ENCODE measurements at regions of chr5 and their contacts with region 1.

Region 1: DNA sequence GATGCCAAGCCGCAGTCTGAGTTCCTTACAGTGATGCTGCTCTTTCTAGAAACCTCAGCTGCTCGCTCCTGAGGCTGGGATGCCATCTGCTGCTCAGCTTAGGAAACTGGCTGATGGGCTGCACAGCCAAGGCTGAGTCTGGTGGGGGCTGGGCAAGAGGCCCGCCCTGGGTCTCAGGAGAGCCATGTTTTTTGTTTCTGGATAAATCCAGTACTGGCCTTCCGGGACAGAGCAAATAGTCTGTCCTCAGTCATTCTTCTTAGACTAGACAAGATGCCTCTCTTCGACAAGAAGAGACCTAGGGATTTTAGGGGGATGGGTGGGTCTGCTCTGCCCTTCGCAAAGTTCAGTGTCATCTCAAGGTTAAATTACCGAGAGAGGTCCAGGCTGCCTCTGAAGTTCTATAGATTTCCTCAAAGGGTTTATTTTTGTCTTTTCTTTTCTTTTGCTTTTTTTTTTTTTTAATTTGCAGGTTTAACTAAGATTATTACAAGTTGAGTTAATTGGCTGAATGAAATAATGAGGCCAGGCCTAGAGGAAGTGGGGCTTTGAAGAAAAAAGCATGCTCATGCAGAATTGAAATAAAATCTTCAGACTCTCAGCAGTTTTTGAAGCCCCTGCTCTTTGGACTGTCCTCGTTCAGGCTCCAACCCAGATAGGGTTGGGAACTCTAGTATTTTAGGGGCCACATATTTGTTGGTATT is 30.6 kb upstream of the MATR3 start:
- DNase-seq: peak; percentile 86
- H3K4me3 Mint-ChIP-seq: no peak overlapping the region
- H3K27ac Mint-ChIP-seq: no peak overlapping the region
- H3K4me1 Mint-ChIP-seq: peaks cover 2% of the 10 kb centered on the region
- H3K27me3 Mint-ChIP-seq: no peaks in the 10 kb centered on the region

Region 2: DNA sequence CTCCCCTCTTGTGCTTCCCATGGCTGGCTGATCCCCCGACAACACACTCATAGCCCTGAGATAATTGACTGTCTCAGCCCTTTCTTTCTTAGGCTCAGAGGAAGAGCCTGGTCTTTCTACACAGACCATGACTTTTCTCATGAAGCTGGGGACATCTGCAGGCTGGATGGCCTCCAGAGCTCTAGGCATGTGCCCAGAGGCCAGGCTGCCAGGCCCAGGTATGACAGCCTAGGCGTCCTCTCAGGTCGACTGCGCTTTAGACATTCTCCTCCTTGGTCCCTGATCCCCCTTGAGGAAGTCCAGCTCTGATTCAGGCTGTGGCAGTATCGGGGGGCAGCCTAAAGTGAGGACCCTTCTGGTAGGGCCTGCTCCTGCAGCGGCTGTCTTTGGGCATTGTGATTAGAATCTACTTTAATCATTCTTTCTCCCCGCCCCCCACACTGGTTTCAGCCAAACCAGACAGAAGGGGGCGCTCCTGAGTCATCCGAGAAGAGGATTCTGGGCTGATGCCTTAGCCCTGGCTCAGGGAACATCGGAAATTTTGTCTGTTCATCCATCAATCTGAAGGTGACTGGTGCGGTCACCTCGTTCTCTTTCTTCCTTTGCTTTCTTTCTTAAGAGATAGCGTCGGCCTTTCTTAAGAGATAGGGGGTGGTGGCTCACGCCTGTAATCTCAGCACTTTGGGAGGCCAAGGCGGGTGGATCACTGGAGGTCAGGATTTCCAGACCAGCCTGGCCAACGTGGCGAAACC is 621.2 kb before region 1 on chr5:
- CTCF ChIA-PET with region 1: interaction called, 7 read pairs
- intact Hi-C with region 1: loop called (anchors 1 kb)
- DNase-seq: peak; percentile 88
- H3K4me3 Mint-ChIP-seq: no peak overlapping the region
- H3K27ac Mint-ChIP-seq: no peak overlapping the region
- H3K4me1 Mint-ChIP-seq: no peaks in the 10 kb centered on the region
- H3K27me3 Mint-ChIP-seq: peaks cover 60% of the 10 kb centered on the region

Region 3: DNA sequence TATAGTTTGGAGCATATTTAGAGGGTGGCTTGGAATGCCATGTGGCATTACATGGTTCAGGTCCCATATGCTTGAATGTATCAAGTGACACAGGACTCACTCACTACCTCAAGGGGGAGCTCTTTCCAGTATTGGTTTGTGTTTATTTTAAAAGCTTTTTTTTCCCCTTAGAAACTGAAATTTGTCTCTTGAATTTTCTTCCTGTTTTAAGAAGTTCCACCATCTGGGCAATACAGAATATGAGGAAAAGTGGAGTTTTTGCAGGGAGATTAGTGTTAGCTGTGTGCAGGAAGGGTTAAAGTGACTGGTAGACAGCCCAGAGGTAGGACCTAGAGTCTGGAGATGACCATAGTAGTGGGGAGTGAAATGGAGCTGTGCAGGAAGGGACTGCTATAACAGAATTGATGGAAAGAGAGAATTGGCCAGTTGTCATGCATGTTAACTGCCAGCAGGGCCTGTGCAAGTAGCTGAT is 473.1 kb before region 1 on chr5:
- CTCF ChIA-PET with region 1: interaction called, 5 read pairs
- intact Hi-C with region 1: loop called (anchors 1 kb)
- DNase-seq: peak; percentile 10
- H3K4me3 Mint-ChIP-seq: no peak overlapping the region
- H3K27ac Mint-ChIP-seq: no peak overlapping the region
- H3K4me1 Mint-ChIP-seq: peaks cover 16% of the 10 kb centered on the region
- H3K27me3 Mint-ChIP-seq: peaks cover 48% of the 10 kb centered on the region

Region 4: GRCh38 chr5:138824924-138825863 is 437.7 kb before region 1 on chr5:
- CTCF ChIA-PET with region 1: interaction called, 5 read pairs
- intact Hi-C with region 1: loop called (anchors 1 kb)
- DNase-seq: no peak
- H3K4me3 Mint-ChIP-seq: no peak overlapping the region
- H3K27ac Mint-ChIP-seq: no peak overlapping the region
- H3K4me1 Mint-ChIP-seq: no peaks in the 10 kb centered on the region
- H3K27me3 Mint-ChIP-seq: peaks cover 16% of the 10 kb centered on the region

Region 5: GRCh38 chr5:138870611-138871010 is 392.3 kb before region 1 on chr5:
- CTCF ChIA-PET with region 1: no interaction called
- intact Hi-C with region 1: loop called (anchors 1 kb)
- DNase-seq: no peak
- H3K4me3 Mint-ChIP-seq: no peak overlapping the region
- H3K27ac Mint-ChIP-seq: no peak overlapping the region
- H3K4me1 Mint-ChIP-seq: peaks cover 16% of the 10 kb centered on the region
- H3K27me3 Mint-ChIP-seq: peaks cover 29% of the 10 kb centered on the region

Region 6: GRCh38 chr5:139246394-139246793 is 16.5 kb before region 1 on chr5:
- CTCF ChIA-PET with region 1: interaction called, 13 read pairs
- intact Hi-C with region 1: no loop called
- DNase-seq: peak; percentile 79
- H3K4me3 Mint-ChIP-seq: no peak overlapping the region
- H3K27ac Mint-ChIP-seq: peak overlapping the region; percentile 70
- H3K4me1 Mint-ChIP-seq: peaks cover 22% of the 10 kb centered on the region
- H3K27me3 Mint-ChIP-seq: no peaks in the 10 kb centered on the region

Measured in activated naive CD4-positive, alpha-beta T cell treated with anti-CD3 and anti-CD28 coated beads for 36 hours (primary cell).